ENCODE measurements at regions of chr11 and their contacts with region 1.

Region 1: DNA sequence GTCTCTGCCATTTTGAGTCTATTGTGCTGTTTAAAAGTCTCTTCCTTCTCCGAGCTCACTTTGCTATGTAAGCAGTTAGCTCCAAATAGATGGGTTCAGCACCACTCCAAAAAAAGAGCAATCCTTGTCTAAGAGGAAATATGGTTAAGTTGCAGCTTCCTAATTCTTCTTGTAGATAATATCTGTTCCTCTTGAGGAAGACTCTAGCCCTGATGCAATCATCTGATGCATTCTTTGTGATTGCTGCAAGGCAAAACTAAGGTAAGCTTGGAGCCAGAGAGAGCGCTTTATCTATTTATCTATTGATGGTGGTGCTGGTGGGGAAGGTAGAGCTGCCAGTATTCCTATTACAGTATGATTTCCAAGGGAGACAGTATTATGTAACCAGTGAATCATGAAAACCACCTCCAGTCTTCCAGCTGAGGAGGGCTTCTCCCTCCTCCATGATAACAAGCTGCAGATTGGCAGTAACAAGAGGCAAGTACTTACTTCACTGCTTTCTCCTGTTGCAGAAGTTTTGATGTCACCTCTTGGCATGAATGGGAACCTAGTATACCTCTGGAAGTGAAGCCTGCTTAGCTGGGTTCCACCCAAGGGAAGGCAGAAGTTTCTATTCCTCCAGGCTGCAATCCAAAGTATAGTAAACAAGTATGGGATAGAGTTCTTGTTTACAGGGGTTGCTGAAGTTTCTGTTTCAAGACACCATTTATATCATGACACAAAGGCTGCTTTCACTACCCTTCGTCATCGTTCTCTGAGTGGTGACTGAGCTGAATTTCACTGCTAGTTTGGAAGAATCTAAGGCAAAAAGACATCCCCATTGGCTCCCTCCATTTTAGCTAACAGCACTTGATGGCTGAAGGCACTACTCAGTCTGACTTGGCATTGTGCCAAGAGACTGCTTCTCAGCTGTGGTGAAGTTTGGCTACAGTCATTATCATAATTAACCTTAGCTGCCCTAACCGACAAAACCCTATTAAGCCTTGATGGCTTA is 49.7 kb downstream of the FDX1 start:
- DNase-seq: no peak
- H3K4me3 ChIP-seq: no peak overlapping the region
- H3K27ac ChIP-seq: no peak overlapping the region
- H3K4me1 ChIP-seq: no peaks in the 10 kb centered on the region
- H3K27me3 ChIP-seq: no peaks in the 10 kb centered on the region
- CTCF ChIP-seq: no peak
- EP300 ChIP-seq: no peak
- POLR2A ChIP-seq: no peak

Region 2: GRCh38 chr11:111230122-111230465 is 750.7 kb after region 1 on chr11:
- intact Hi-C with region 1: loop called in 1 of 4 experiments (anchors 10 kb)
- DNase-seq: no peak
- H3K4me3 ChIP-seq: no peak overlapping the region
- H3K27ac ChIP-seq: no peak overlapping the region
- H3K4me1 ChIP-seq: peaks cover 1% of the 10 kb centered on the region
- H3K27me3 ChIP-seq: no peaks in the 10 kb centered on the region
- CTCF ChIP-seq: no peak
- EP300 ChIP-seq: no peak
- POLR2A ChIP-seq: no peak

Measured in ovary (tissue), 10 donors.